Common myeloid progenitor, CD34-positive (primary cell): ENCODE measurements at regions of chr20 and their contacts with region 1.

Region 1: DNA sequence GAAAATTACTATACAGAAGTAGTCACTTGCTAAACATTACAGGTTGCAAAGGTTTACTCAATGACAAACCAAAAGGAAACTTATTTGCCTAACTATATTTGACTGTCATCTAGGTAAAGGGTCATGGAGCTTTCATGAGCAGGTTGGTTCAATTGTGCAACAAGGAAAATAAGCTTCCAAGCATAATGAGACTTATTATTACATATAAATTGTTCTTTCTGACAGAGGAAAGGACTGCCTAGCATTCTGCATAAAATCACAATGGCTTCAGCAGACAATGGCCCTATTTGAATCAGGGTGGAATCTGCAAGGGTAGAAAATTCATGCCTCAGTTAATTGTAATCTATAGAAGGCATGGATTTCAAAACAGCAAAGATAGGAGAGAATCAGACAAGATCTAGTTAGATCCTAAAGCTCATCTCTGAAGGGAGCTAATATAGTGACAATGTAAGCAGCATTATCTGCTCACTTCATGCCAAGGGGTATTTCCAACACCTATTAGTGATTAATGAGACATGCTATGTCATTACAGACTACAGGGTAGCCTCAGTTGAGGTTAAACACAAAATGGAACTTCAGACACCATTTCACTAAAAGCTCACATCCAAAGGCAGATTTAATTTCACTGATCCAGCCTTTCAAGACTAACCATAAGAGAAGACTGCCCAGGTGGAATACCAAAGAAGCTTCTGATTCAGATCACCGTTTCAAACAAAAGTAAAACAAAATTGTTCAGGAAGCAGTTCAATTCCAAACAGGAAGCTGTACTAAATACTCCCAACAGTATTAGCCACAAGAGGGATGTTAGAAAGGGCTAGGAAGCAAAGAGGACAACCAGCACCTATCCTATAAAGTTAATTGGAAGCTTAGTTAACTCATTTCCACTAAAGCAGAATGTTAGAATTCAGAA is 8.5 kb downstream of the STAU1 start:
- DNase-seq: peak in 2 of 3 donors; percentile 26 to 43
- H3K4me3 ChIP-seq: no peak overlapping the region
- H3K27ac ChIP-seq: peak overlapping the region in 1 of 2 experiments; percentile 4
- H3K4me1 ChIP-seq: peaks cover 8 to 14% (median 13%) of the 10 kb centered on the region in 4 experiments
- H3K27me3 ChIP-seq: no peaks in the 10 kb centered on the region

Region 2: DNA sequence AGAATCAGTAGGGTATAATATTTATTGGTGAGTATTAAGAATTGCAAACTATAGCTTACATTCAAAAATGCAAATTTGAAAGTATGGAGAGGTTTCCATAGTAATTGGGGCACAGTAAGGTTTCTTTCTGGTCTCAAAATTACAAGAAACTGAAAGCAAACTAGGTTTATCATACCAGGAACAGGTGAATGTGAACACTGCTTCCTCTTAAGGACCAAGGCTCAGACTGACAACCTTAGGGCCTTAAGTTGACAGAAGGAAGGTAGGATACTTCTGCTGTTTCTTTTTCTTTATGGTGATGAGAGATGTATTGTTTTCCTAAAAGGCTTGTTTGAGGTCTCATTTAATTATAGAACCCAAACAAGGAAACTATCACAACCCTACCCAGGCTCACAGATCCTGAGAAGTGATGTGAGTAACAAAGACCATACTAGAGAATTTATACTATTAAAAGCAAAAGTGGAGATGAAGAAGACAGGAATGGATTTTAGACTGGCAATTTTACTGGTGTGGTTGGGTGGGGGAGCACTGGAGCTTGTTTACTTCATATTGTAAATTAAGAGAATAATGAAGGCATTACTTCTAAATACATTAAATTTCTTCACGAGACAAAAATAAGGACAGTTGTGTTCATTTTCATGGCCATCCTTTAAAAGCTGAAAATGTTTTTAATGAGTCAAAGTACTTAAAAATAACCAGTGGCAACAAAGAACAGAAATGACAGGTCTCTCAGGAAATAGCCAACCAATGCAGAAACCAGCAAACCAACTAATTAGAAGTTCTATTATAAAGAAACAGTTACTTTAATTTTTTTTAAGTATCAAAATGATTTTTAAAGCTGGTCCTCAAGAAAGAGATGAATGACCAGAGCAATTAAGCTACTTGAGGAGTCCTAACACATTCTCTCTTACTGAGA is 12.8 kb before region 1 on chr20:
- CTCF ChIA-PET with region 1: interaction called, 13 read pairs
- POLR2A ChIA-PET with region 1: interaction called, 3 read pairs
- DNase-seq: peak in 2 of 3 donors; percentile 28 to 40
- H3K4me3 ChIP-seq: no peak overlapping the region
- H3K27ac ChIP-seq: peak overlapping the region in 1 of 2 experiments; percentile 25
- H3K4me1 ChIP-seq: peaks cover 0 to 18% (median 8%) of the 10 kb centered on the region in 4 experiments
- H3K27me3 ChIP-seq: no peaks in the 10 kb centered on the region